Body of pancreas (tissue), 4 donors: ENCODE measurements at regions of chr1 and their contacts with region 1.

Region 1: DNA sequence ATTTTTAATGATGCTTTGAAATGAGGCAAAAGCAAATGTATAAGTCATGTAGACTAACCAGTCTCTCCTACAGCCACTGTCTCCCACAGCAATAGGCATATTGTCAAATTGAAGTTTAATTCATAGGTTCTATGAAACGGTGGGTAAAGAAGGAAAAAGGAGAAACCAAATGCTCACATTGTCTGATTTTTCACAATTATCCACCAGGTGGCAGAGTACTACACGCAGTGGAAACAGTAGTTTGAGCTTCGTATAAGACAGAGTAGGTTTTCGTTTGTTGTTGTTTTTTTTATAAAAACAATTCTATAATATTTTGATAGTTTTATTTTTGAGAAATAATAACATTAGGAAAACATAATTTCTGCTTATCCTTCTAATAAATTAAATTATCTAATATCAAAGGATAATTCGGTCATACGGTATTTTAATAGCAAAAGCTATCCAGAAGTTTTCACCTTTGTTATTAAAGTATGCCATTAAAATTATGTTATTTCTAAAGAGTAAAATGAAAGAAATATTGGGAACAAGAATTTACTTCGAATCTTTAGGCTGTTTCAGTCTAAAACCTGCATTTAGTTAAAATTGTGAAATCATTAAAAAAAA is 39.1 kb downstream of the TYW3 start:
- DNase-seq: peak in 2 of 4 donors; percentile 7 to 34
- ATAC-seq: peak; percentile 71
- H3K4me3 ChIP-seq: no peak overlapping the region
- H3K27ac ChIP-seq: no peak overlapping the region
- H3K4me1 ChIP-seq: no peaks in the 10 kb centered on the region
- H3K27me3 ChIP-seq: no peaks in the 10 kb centered on the region
- CTCF ChIP-seq: peak in 6 of 7 experiments; percentile 59 to 71 (median 66)
- POLR2A ChIP-seq: no peak

Region 2: GRCh38 chr1:74317663-74318062 is 454.4 kb before region 1 on chr1:
- intact Hi-C with region 1: no loop called
- DNase-seq: no peak
- ATAC-seq: no peak
- H3K4me3 ChIP-seq: no peak overlapping the region
- H3K27ac ChIP-seq: no peak overlapping the region
- H3K4me1 ChIP-seq: no peaks in the 10 kb centered on the region
- H3K27me3 ChIP-seq: no peaks in the 10 kb centered on the region
- CTCF ChIP-seq: no peak
- POLR2A ChIP-seq: no peak

Region 3: GRCh38 chr1:75203415-75204277 is 431.6 kb after region 1 on chr1:
- intact Hi-C with region 1: loop called (anchors 5 kb)
- DNase-seq: peak in 2 of 4 donors; percentile 6 to 13
- ATAC-seq: peak; percentile 45
- H3K4me3 ChIP-seq: no peak overlapping the region
- H3K27ac ChIP-seq: no peak overlapping the region
- H3K4me1 ChIP-seq: peaks cover 6% of the 10 kb centered on the region
- H3K27me3 ChIP-seq: no peaks in the 10 kb centered on the region
- CTCF ChIP-seq: peak; percentile 28 to 88 (median 65)
- POLR2A ChIP-seq: no peak